ENCODE measurements at regions of chr7 and their contacts with region 1.

Region 1: GRCh38 chr7:135274495-135275268 is 41.0 kb downstream of the STRA8 start:
- DNase-seq: peak; percentile 49
- H3K4me3 ChIP-seq: no peak overlapping the region
- H3K27ac ChIP-seq: no peak overlapping the region
- H3K4me1 ChIP-seq: no peaks in the 10 kb centered on the region
- H3K27me3 ChIP-seq: peaks cover 33% of the 10 kb centered on the region
- CTCF ChIP-seq: peak; percentile 92

Region 2: GRCh38 chr7:135558337-135558767 is 283.7 kb after region 1 on chr7:
- intact Hi-C with region 1: loop called (anchors 10 kb)
- DNase-seq: peak; percentile 34
- H3K4me3 ChIP-seq: peak overlapping the region; percentile 88
- H3K27ac ChIP-seq: peak overlapping the region; percentile 98
- H3K4me1 ChIP-seq: peaks cover 32% of the 10 kb centered on the region
- H3K27me3 ChIP-seq: no peaks in the 10 kb centered on the region
- CTCF ChIP-seq: peak; percentile 65

Measured in left ventricle myocardium inferior (tissue), 1 donor.